K562 (cell line): ENCODE measurements at regions of chr22 and their contacts with region 1.

Region 1: GRCh38 chr22:20418211-20418788 is 19.3 kb downstream of the SCARF2 start:
- DNase-seq: peak; percentile 94 to 100 (median 99)
- ATAC-seq: peak; percentile 84
- H3K4me3 ChIP-seq: peak overlapping the region; percentile 32
- H3K27ac ChIP-seq: no peak overlapping the region
- H3K4me1 ChIP-seq: peaks cover 0 to 18% of the 10 kb centered on the region in 2 experiments; a peak in 3 of 5 replicates
- H3K27me3 ChIP-seq: peaks cover 21 to 32% of the 10 kb centered on the region in 2 experiments; a peak in 4 of 5 replicates
- CTCF ChIP-seq: peak; percentile 98 to 100 (median 99)
- EP300 ChIP-seq: peak; percentile 58; the same call in 1 of the 2 replicates
- POLR2A ChIP-seq: no peak
- RAD21 ChIP-seq: peak; percentile 100

Region 2: GRCh38 chr22:20126284-20127029 is 291.8 kb before region 1 on chr22:
- CTCF ChIA-PET with region 1: no interaction called
- POLR2A ChIA-PET with region 1: no interaction called
- in situ Hi-C with region 1: no loop called
- intact Hi-C with region 1: no loop called
- DNase-seq: no peak
- ATAC-seq: no peak
- H3K4me3 ChIP-seq: no peak overlapping the region
- H3K27ac ChIP-seq: no peak overlapping the region
- H3K4me1 ChIP-seq: peaks cover 3 to 75% of the 10 kb centered on the region in 2 experiments; a peak in 4 of 5 replicates
- H3K27me3 ChIP-seq: no peaks in the 10 kb centered on the region
- CTCF ChIP-seq: no peak
- EP300 ChIP-seq: no peak
- POLR2A ChIP-seq: peak; percentile 59
- RAD21 ChIP-seq: no peak

Region 3: GRCh38 chr22:20405931-20406685 is 12.2 kb before region 1 on chr22:
- CTCF ChIA-PET with region 1: interaction called, 3 read pairs
- POLR2A ChIA-PET with region 1: interaction called, 10 read pairs
- in situ Hi-C with region 1: no loop called
- intact Hi-C with region 1: no loop called
- DNase-seq: peak in 1 of 4 experiments; percentile 33
- ATAC-seq: no peak
- H3K4me3 ChIP-seq: no peak overlapping the region
- H3K27ac ChIP-seq: no peak overlapping the region
- H3K4me1 ChIP-seq: peaks cover 0 to 8% of the 10 kb centered on the region in 2 experiments; a peak in 2 of 5 replicates
- H3K27me3 ChIP-seq: no peaks in the 10 kb centered on the region
- CTCF ChIP-seq: no peak
- EP300 ChIP-seq: no peak
- POLR2A ChIP-seq: 0 out of 2 replicates have a peak, but pooled peaks have one; percentile 5
- RAD21 ChIP-seq: no peak

Region 4: GRCh38 chr22:20456064-20456721 is 37.9 kb after region 1 on chr22:
- CTCF ChIA-PET with region 1: interaction called, 195 read pairs
- POLR2A ChIA-PET with region 1: interaction called, 11 read pairs
- in situ Hi-C with region 1: loop called (anchors 5 kb)
- intact Hi-C with region 1: loop called (anchors 1 kb)
- DNase-seq: peak; percentile 98 to 100 (median 99)
- ATAC-seq: peak; percentile 97
- H3K4me3 ChIP-seq: no peak overlapping the region
- H3K27ac ChIP-seq: no peak overlapping the region
- H3K4me1 ChIP-seq: no peaks in the 10 kb centered on the region; a peak in 1 of 5 replicates
- H3K27me3 ChIP-seq: peaks cover 6 to 7% of the 10 kb centered on the region in 2 experiments; a peak in 4 of 5 replicates
- CTCF ChIP-seq: peak; percentile 99 to 100 (median 100)
- EP300 ChIP-seq: peak; percentile 48; the same call in 1 of the 2 replicates
- POLR2A ChIP-seq: no peak
- RAD21 ChIP-seq: peak; percentile 100

Region 5: DNA sequence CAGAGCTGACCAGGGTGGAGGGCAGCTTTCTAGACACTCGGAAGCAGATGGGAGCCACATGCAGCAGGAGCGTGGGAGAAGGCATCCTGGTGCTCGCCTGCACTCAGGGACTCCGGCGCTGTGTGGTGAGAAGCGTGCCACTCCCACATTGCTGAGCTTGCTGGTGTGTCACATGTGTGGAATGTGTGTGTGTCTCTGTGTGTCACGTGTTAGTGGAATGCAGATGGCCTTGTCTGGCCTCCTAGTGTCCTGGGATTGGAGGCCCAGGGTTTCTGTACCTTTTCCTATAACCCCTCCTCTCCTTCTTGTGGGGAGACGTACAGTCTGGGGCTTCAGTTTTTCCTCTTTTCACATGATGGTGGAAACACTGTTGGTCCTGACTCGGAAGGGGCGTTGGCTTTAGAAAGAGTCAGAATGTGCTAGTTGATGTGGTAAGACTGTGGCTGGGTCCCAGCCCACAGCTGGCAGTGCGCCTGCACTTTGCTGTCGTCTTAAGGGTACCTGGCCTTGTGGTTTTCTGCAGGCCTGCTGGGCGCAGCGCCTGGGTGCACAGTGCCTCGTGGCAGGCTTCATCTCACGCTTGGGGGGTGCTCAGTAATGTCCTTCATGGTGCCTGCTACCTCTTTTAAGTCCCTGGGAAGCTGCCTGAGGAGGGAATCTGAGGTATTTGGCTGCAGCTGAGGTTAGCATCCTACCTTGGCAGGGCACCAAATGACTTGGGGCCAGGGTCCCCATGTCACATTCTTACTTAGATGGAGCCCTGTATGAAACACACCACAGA is 150.9 kb after region 1 on chr22:
- CTCF ChIA-PET with region 1: interaction called, 35 read pairs
- POLR2A ChIA-PET with region 1: interaction called, 3 read pairs
- in situ Hi-C with region 1: loop called (anchors 5 kb)
- intact Hi-C with region 1: loop called (anchors 1 kb)
- DNase-seq: no peak
- ATAC-seq: no peak
- H3K4me3 ChIP-seq: no peak overlapping the region
- H3K27ac ChIP-seq: no peak overlapping the region
- H3K4me1 ChIP-seq: peaks cover under 1 to 9% of the 10 kb centered on the region in 2 experiments; a peak in 3 of 5 replicates
- H3K27me3 ChIP-seq: no peaks in the 10 kb centered on the region
- CTCF ChIP-seq: no peak; a peak in 1 of 6 replicates
- EP300 ChIP-seq: no peak
- POLR2A ChIP-seq: no peak
- RAD21 ChIP-seq: no peak

Region 6: DNA sequence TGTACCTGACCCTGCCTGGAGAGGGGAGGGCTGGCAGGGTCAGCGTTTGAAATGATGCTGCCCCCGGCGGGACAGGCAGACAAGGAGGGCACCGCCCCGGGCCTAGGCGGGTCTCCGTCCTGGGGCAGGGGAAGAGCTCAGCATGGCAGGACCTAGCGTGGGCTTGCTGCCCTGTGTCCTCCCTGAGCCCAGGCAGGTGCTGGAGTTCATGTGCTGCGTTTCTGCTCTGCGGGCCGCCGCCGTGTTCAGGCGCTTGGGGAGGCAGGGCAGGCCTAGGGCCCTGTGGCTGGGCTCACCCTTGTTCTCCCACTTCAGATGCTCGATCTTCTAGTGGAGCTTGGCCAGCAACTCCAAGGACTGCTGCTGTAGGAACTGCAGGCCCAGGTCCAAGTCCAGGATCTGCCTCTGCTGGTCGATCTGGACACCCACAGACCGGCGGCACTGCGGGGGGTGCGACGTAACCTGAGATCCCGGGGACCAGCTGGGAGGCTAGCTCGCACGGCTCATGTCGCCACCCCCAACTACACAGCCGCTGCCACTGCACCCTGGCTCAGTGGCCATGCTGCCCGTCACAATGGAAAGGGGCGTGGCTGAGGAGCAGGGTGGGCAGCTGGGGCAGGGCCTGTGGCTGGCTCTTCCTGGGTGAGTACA is 173.5 kb after region 1 on chr22:
- CTCF ChIA-PET with region 1: no interaction called
- POLR2A ChIA-PET with region 1: interaction called, 3 read pairs
- in situ Hi-C with region 1: no loop called
- intact Hi-C with region 1: loop called (anchors 5 kb)
- DNase-seq: peak; percentile 74 to 96 (median 90)
- ATAC-seq: peak; percentile 42
- H3K4me3 ChIP-seq: no peak overlapping the region
- H3K27ac ChIP-seq: no peak overlapping the region
- H3K4me1 ChIP-seq: peaks cover 0 to 26% of the 10 kb centered on the region in 2 experiments; a peak in 2 of 5 replicates
- H3K27me3 ChIP-seq: peaks cover 35 to 65% of the 10 kb centered on the region in 2 experiments
- CTCF ChIP-seq: peak; percentile 3 to 31 (median 16); a peak in 1 of 6 replicates
- EP300 ChIP-seq: no peak
- POLR2A ChIP-seq: no peak
- RAD21 ChIP-seq: no peak

Region 7: GRCh38 chr22:20671409-20672081 is 253.2 kb after region 1 on chr22:
- CTCF ChIA-PET with region 1: no interaction called
- POLR2A ChIA-PET with region 1: interaction called, 4 read pairs
- in situ Hi-C with region 1: loop called (anchors 25 kb)
- intact Hi-C with region 1: loop called (anchors 10 kb)
- DNase-seq: no peak
- ATAC-seq: peak; percentile 55; the same call in 2 of the 3 replicates
- H3K4me3 ChIP-seq: no peak overlapping the region
- H3K27ac ChIP-seq: no peak overlapping the region
- H3K4me1 ChIP-seq: peaks cover 0 to 18% of the 10 kb centered on the region in 2 experiments; a peak in 1 of 5 replicates
- H3K27me3 ChIP-seq: peaks cover 23 to 28% of the 10 kb centered on the region in 2 experiments
- CTCF ChIP-seq: no peak
- EP300 ChIP-seq: no peak
- POLR2A ChIP-seq: no peak
- RAD21 ChIP-seq: no peak